HEK293T (cell line): ENCODE measurements at regions of chr12 and their contacts with region 1.

Region 1: GRCh38 chr12:92987362-92987761 is 58.3 kb upstream of the EEA1 start:
- DNase-seq: peak; percentile 46

Region 2: GRCh38 chr12:92827836-92828431 is 159.4 kb before region 1 on chr12:
- CTCF ChIA-PET with region 1: interaction called, 11 read pairs
- POLR2A ChIA-PET with region 1: no interaction called
- DNase-seq: peak; percentile 45

Region 3: GRCh38 chr12:92973601-92974000 is 13.8 kb before region 1 on chr12:
- CTCF ChIA-PET with region 1: interaction called, 10 read pairs
- POLR2A ChIA-PET with region 1: no interaction called
- DNase-seq: no peak

Region 4: GRCh38 chr12:93373961-93374656 is 386.7 kb after region 1 on chr12:
- CTCF ChIA-PET with region 1: interaction called, 10 read pairs
- POLR2A ChIA-PET with region 1: no interaction called
- DNase-seq: no peak

Region 5: GRCh38 chr12:93397412-93397811 is 410.1 kb after region 1 on chr12:
- CTCF ChIA-PET with region 1: interaction called, 13 read pairs
- POLR2A ChIA-PET with region 1: no interaction called
- DNase-seq: no peak